ENCODE measurements at regions of chr1 and their contacts with region 1.

Region 1: GRCh38 chr1:89022167-89022959 is at the start of gene GBP3:
- DNase-seq: peak in 2 of 5 donors; percentile 34 to 44
- H3K4me3 ChIP-seq: peak within 1 kb of the TSS; percentile 82
- H3K4me3 Mint-ChIP-seq: peak within 1 kb of the TSS; percentile 92 to 96 (median 93)
- H3K27ac ChIP-seq: peak within 1 kb of the TSS; percentile 63
- H3K27ac Mint-ChIP-seq: peak within 1 kb of the TSS; percentile 86 to 99 (median 94)
- H3K4me1 ChIP-seq: peaks cover 35% of the 10 kb centered on the region
- H3K4me1 Mint-ChIP-seq: peaks cover 49 to 56% (median 55%) of the 10 kb centered on the region in 3 donors
- H3K27me3 ChIP-seq: no peaks in the 10 kb centered on the region
- H3K27me3 Mint-ChIP-seq: peaks cover 0 to 7% of the 10 kb centered on the region in 2 donors
- total RNA-seq, gene GBP3: 8.4 to 12.1 TPM

Region 2: DNA sequence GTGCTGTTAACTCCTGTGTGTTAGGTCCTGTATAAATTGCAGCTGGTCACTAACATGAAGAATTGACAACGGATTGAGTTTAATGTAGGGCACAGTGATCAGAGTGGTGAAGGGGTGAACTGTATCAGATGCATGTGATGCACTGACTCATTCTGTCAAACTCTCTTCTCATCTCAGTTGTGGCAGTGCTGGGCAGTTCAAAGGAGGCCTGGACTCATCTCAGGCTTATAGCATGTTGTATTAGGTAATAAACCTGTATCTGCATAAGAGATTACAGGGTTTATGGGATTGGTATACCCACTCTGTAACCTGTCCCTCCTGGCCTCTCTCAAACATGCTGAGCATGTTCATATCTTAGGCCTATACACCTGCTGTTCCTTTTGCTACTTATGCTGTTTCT is 12.7 kb after region 1 on chr1:
- CTCF ChIA-PET with region 1: interaction called, 12 read pairs
- POLR2A ChIA-PET with region 1: interaction called, 3 read pairs
- DNase-seq: no peak
- H3K4me3 ChIP-seq: no peak overlapping the region
- H3K4me3 Mint-ChIP-seq: peak overlapping the region in 1 of 7 donors; percentile 4
- H3K27ac ChIP-seq: no peak overlapping the region
- H3K27ac Mint-ChIP-seq: peak overlapping the region in 7 of 8 donors; percentile 7 to 83 (median 64)
- H3K4me1 ChIP-seq: peaks cover 17% of the 10 kb centered on the region
- H3K4me1 Mint-ChIP-seq: peaks cover 51 to 69% (median 64%) of the 10 kb centered on the region in 3 donors
- H3K27me3 ChIP-seq: no peaks in the 10 kb centered on the region
- H3K27me3 Mint-ChIP-seq: no peaks in the 10 kb centered on the region

Region 3: GRCh38 chr1:89670163-89670562 is 647.8 kb after region 1 on chr1:
- CTCF ChIA-PET with region 1: no interaction called
- POLR2A ChIA-PET with region 1: interaction called, 15 read pairs
- DNase-seq: peak in 4 of 5 donors; percentile 1 to 70 (median 42)
- H3K4me3 ChIP-seq: no peak overlapping the region
- H3K4me3 Mint-ChIP-seq: peak overlapping the region; percentile 13 to 66 (median 52)
- H3K27ac ChIP-seq: peak overlapping the region; percentile 39
- H3K27ac Mint-ChIP-seq: peak overlapping the region; percentile 27 to 88 (median 69)
- H3K4me1 ChIP-seq: peaks cover 81% of the 10 kb centered on the region
- H3K4me1 Mint-ChIP-seq: peaks cover 85 to 100% (median 99%) of the 10 kb centered on the region in 3 donors
- H3K27me3 ChIP-seq: no peaks in the 10 kb centered on the region
- H3K27me3 Mint-ChIP-seq: no peaks in the 10 kb centered on the region